MCF 10A (cell line): ENCODE measurements at regions of chr1 and their contacts with region 1.

Region 1: GRCh38 chr1:181142096-181142958 is 53.8 kb downstream of the IER5 start:
- DNase-seq: peak; percentile 91
- H3K4me3 Mint-ChIP-seq: peak overlapping the region; percentile 40
- H3K27ac Mint-ChIP-seq: no peak overlapping the region
- H3K4me1 Mint-ChIP-seq: peaks cover 53% of the 10 kb centered on the region
- H3K27me3 Mint-ChIP-seq: no peaks in the 10 kb centered on the region
- CTCF ChIP-seq: peak; percentile 99

Region 2: GRCh38 chr1:180887841-180888240 is 254.5 kb before region 1 on chr1:
- CTCF ChIA-PET with region 1: interaction called, 78 read pairs
- POLR2A ChIA-PET with region 1: interaction called, 4 read pairs
- intact Hi-C with region 1: no loop called
- DNase-seq: no peak
- H3K4me3 Mint-ChIP-seq: no peak overlapping the region
- H3K27ac Mint-ChIP-seq: no peak overlapping the region
- H3K4me1 Mint-ChIP-seq: no peaks in the 10 kb centered on the region
- H3K27me3 Mint-ChIP-seq: no peaks in the 10 kb centered on the region
- CTCF ChIP-seq: no peak

Region 3: GRCh38 chr1:181021811-181022434 is 120.4 kb before region 1 on chr1:
- CTCF ChIA-PET with region 1: interaction called, 97 read pairs
- POLR2A ChIA-PET with region 1: interaction called, 67 read pairs
- intact Hi-C with region 1: no loop called
- DNase-seq: peak; percentile 86
- H3K4me3 Mint-ChIP-seq: peak overlapping the region; percentile 93
- H3K27ac Mint-ChIP-seq: peak overlapping the region; percentile 91
- H3K4me1 Mint-ChIP-seq: peaks cover 19% of the 10 kb centered on the region
- H3K27me3 Mint-ChIP-seq: no peaks in the 10 kb centered on the region
- CTCF ChIP-seq: no peak

Region 4: GRCh38 chr1:181077576-181078242 is 64.6 kb before region 1 on chr1:
- CTCF ChIA-PET with region 1: interaction called, 215 read pairs
- POLR2A ChIA-PET with region 1: interaction called, 3 read pairs
- intact Hi-C with region 1: no loop called
- DNase-seq: no peak
- H3K4me3 Mint-ChIP-seq: peak overlapping the region; percentile 2
- H3K27ac Mint-ChIP-seq: peak overlapping the region; percentile 74
- H3K4me1 Mint-ChIP-seq: peaks cover 37% of the 10 kb centered on the region
- H3K27me3 Mint-ChIP-seq: no peaks in the 10 kb centered on the region
- CTCF ChIP-seq: no peak

Region 5: DNA sequence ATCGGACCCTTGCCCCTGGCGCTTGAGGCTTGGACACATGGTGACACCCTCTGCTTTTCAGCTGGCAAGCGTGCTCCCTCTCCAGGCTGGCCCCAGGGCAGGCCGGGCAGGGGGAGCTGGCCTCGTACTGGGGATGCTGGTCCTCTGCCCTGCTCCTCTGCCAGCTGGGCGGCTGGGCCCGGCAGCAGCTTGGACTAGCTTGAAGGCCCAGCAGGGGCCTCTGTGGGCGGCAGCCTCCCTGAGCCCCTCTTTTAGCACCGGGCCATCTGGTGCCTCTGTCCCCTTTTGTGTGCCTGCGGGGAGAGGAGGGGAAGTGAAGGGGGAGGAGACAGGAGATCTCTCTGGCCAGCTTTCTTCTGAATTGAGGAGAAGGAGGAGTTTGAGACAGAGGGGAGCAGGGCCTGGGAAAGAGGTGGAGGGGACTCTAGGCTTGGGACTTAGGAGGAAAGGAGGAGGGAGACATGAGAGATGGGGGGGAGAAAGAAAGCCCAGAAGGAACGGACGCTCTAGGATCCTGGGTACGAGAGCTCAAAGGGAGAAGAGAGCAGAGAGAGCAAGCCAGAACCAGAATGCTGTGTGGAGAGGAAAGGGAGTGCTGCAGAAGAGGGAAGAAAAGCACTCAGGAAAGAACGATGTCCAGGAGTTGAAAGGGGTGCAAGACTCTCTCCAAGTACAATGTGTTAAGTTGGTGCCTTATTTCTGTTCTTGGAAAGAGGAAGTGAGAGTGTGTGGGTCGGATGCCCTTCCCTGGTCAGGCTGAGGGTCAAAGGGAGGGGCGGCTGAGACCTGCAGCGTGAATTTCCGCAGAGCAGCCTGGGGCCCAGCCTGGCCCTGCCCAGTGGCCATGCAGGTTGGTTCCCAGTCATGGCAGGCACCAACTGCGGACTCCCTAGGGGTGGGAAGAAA is 13.5 kb before region 1 on chr1:
- CTCF ChIA-PET with region 1: interaction called, 13 read pairs
- POLR2A ChIA-PET with region 1: interaction called, 1,402 read pairs
- intact Hi-C with region 1: no loop called
- DNase-seq: no peak
- H3K4me3 Mint-ChIP-seq: no peak overlapping the region
- H3K27ac Mint-ChIP-seq: no peak overlapping the region
- H3K4me1 Mint-ChIP-seq: peaks cover 32% of the 10 kb centered on the region
- H3K27me3 Mint-ChIP-seq: no peaks in the 10 kb centered on the region
- CTCF ChIP-seq: no peak